RWPE1 (cell line): ENCODE measurements at regions of chr19 and their contacts with region 1.

Region 1: DNA sequence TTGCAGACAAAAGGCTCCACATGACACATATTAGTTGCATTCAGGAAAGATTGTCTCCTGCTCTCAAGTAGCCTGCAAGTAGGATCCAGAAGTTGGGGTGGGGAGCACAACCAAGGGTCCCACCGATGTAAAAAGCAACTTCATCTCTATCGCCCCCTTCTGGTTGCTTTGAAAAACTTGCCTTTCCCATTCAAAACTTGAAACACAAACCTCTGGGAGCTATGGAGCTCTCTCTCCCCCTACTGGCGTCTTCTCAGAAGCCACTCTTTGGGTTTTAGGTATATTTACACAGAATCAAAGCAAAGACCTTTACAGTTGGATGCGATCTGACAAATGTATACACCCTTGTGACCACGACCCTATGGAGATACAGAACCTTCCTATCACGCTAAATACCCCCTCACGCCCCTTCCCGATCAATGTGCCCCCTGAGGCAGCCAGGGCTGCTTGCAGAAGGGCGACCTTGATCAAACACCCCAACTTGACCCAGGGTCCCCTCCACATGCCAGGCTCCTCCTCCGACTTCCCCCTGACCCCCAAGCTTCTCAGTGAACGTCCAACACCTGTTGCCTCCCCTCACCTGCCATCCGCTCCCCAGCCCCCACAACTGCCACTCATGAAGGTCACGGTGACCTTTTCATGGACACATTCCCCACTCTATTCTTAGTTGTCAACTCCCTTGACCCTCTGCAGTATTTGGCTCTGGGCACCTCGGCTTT is 10.1 kb downstream of the NOSIP start:
- DNase-seq: peak; percentile 86
- H3K27ac ChIP-seq: peak overlapping the region; percentile 65
- CTCF ChIP-seq: peak; percentile 95

Region 2: DNA sequence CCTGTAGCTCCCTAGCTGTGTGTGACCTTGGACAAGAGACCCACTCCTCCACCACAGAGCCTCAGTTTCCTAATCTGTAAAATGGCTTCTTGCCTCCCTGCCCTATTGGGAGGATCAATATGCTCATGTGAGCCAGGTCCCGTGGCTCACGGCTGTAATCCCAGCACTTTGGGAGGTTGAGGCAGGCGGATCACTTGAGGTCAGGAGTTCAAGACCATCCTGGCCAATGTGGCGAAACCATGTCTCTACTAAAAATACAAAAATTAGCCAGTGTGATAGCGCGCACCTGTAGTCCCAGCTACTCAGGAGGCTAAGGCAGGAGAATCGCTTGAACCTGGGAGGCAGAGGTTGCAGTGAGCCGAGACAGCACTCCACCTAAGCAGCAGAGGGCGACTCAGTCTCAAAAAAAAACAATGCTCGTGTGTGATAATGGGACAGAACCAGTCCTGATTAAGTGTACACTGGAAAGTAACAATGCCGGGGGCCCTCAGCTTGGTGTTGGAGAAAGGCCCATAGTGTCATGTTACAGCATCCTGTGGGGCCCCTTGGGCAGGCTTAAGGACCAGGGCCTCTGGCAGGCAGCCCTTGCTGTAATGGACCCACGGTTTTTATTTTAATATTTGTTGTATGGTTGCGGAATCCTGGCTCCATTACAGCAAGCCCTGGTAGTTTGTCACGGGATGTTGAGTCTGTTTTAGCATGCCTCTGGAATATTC is 67.3 kb before region 1 on chr19:
- CTCF ChIA-PET with region 1: interaction called, 12 read pairs
- POLR2A ChIA-PET with region 1: no interaction called
- DNase-seq: peak; percentile 48
- H3K27ac ChIP-seq: no peak overlapping the region
- CTCF ChIP-seq: peak; percentile 74

Region 3: DNA sequence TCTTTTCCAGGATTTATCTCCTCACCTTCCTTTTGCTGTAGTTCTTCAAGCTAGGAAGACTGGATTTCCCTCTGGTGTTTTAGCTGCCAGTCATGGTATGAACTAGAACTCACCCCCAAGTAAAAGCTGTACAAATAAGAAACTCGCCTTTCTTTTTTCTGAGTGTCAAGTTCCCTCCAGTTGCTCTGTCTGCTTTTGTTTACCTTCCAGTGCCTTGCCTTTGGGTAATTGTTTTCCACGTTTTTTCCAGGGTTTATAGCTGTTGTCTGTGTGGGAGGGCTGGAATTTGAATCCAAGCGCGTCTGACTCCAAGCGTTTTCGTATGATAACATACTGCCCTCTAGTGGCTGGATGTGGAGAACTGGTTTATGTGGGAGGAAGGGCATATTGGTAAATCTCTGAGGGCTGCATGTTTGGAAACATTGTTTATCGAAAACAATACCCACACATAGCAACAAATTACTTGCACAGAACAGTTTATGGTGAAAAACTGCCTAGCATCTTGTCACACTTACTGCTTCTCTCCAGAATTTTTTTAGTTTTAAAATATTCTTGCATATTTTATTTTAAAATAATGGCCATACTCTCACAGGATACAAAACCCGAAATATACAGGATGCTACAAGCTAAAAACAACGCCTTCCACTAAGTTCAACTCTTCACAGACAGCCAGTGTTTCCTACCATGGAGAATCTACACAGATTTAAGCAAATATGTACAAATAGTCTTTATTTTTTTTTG is 23.3 kb before region 1 on chr19:
- CTCF ChIA-PET with region 1: interaction called, 10 read pairs
- POLR2A ChIA-PET with region 1: no interaction called
- DNase-seq: peak; percentile 75
- H3K27ac ChIP-seq: no peak overlapping the region
- CTCF ChIP-seq: peak; percentile 82

Region 4: GRCh38 chr19:49558591-49558990 is 11.7 kb before region 1 on chr19:
- CTCF ChIA-PET with region 1: interaction called, 10 read pairs
- POLR2A ChIA-PET with region 1: no interaction called
- DNase-seq: no peak
- H3K27ac ChIP-seq: peak overlapping the region; percentile 41
- CTCF ChIP-seq: no peak

Region 5: GRCh38 chr19:49665351-49666119 is 95.2 kb after region 1 on chr19 and contains the starts of genes BCL2L12 and IRF3:
- CTCF ChIA-PET with region 1: interaction called, 5 read pairs
- POLR2A ChIA-PET with region 1: interaction called, 11 read pairs
- DNase-seq: peak; percentile 97
- H3K27ac ChIP-seq: peak within 1 kb of the TSS; percentile 97
- CTCF ChIP-seq: no peak